BJ (cell line): ENCODE measurements at regions of chr15 and their contacts with region 1.

Region 1: GRCh38 chr15:90954712-90955671 is at the start of gene RCCD1:
- DNase-seq: peak; percentile 68
- H3K4me3 ChIP-seq: peak within 1 kb of the TSS; percentile 78
- H3K27me3 ChIP-seq: no peaks in the 10 kb centered on the region
- CTCF ChIP-seq: no peak
- polyA plus RNA-seq, gene RCCD1: 7.0 and 9.6 TPM in 2 replicates

Region 2: DNA sequence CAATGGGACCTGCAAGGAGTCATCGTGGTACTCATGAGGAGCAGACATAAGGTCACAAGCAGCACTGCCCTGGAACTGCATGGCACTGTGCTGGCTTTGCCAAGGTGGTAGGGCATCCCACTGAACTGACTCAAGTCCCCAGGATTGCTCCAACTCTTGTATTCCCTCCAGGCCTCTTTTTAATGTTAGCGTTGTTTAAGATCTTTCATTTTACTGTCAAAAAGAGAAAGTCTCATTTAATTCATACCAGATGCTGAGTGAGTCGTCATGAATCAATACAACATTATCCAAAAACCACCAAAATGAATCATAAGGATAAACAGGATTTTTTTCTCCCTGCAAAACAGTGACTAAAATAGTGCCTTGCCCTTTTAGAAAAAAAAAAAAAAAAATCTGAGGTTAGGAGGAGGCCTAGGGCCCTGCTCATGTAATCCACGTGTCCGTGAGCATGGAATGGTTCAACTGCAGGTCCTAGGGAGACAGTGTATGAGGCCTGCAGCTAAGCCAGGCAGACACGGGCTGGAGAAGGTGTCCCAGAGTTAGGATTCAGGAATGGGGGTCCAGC is 274.5 kb before region 1 on chr15:
- CTCF ChIA-PET with region 1: no interaction called
- POLR2A ChIA-PET with region 1: no interaction called
- DNase-seq: peak; percentile 96
- H3K4me3 ChIP-seq: no peak overlapping the region
- H3K27me3 ChIP-seq: no peaks in the 10 kb centered on the region
- CTCF ChIP-seq: no peak

Region 3: DNA sequence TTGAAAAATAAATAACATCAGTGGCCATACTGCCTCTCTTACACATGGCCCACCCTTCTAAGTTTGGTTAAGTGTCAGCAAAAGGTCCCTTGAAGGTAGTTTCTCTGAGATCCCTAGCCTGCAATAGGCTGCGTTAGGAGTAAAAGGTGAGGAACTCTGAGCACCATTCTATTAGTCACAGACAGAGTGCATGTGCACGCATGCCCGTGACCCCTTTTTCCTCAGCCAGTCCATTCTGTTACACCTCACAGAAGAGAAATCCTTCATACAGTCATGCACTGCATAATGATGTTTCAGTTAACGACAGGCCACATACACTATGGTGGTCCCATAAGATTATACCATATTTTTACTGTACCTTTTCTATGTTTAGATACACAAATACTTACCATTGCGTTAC is 12.2 kb after region 1 on chr15:
- CTCF ChIA-PET with region 1: interaction called, 27 read pairs
- POLR2A ChIA-PET with region 1: no interaction called
- DNase-seq: no peak
- H3K4me3 ChIP-seq: no peak overlapping the region
- H3K27me3 ChIP-seq: no peaks in the 10 kb centered on the region
- CTCF ChIP-seq: no peak

Region 4: DNA sequence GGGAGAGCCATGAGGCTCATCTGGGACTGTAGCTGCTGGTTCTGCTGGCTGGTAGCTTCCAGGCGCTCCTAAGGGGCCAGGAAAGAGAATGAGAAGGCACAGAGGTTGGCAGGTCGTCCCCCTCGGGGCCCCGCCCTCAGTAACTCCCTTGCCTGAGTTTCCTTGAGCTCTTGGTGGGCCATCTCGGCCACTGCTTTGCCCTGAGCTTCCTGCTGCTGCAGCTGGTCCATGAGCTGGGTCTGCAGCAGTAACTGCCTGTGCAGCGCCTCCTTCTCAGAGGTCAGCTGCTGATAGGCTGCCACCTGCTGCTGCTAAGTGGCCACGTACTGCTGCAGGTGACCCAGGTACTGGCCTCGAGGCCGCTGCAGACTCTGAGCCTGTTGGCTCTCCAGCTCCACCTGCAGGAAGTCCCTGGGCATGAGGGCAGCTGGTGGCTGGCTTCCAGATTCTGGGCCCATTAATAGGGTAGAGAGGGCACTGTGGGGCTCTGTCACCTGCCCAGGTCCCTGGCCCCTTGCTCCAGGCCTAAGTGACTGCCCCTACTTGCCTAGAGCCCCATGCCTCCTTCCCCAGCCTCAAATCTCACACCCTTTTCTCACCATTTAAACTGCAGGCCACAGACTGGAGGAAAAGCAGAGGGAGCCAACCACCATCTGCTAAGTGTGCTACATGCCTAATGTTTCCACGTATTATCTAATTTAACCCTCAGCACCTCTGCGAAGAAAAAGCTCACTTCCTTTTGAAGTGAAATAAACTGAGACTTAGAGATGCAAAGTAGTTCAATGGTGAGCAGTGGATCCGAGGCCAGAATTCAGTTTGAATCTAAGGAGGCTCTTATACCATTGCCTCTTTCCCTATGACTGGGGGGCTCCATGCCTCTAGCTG is 78.2 kb after region 1 on chr15:
- CTCF ChIA-PET with region 1: interaction called, 39 read pairs
- POLR2A ChIA-PET with region 1: no interaction called
- DNase-seq: no peak
- H3K4me3 ChIP-seq: no peak overlapping the region
- H3K27me3 ChIP-seq: peaks cover 7% of the 10 kb centered on the region
- CTCF ChIP-seq: peak; percentile 70

Region 5: GRCh38 chr15:91055548-91056331 is 100.7 kb after region 1 on chr15:
- CTCF ChIA-PET with region 1: interaction called, 122 read pairs
- POLR2A ChIA-PET with region 1: no interaction called
- DNase-seq: no peak
- H3K4me3 ChIP-seq: no peak overlapping the region
- H3K27me3 ChIP-seq: peaks cover 2% of the 10 kb centered on the region
- CTCF ChIP-seq: peak; percentile 73